ENCODE measurements at regions of chr3 and their contacts with region 1.

Region 1: DNA sequence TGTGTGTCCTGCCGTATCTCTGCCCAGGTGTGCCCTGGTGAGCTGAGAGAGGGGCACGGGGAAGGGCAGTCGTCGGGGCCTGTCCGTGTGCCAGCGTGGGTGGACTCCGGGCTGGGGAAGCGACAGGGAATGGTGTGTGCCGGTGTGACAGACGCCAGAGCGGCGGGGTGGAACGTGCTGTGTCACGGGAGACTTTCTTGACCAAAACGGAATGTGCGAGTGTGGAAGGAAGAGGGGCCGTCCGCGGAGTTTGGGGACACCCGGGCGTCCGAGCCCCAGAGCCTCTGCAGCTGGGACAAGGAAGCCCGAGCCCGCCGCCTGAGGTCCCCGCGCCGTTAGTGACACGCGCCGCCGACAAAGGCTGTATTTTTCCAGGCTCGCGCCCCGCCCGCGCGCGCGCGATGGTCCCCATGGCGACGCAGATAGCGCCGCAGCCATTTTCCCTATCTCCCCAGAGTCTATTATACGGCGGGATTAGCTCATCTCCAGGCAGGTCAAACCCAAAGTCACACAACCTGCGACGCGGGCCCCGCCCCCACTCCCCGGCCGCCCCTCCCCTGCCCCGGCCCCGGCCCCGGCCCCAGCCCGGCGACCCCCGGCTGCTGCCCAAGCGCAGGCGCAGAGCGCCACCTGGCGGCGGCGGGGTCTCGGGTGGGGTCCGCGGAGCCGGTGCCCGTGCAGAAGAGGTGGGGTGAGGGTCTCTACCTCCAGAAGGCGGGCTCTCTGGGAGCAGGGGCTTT is 4.6 kb upstream of the GATA2 start:
- DNase-seq: peak in 1 of 2 experiments; percentile 97
- H3K4me3 ChIP-seq: peak overlapping the region; percentile 34 to 59 (median 46)
- H3K27ac ChIP-seq: no peak overlapping the region
- H3K4me1 ChIP-seq: peaks cover 0 to 33% (median 18%) of the 10 kb centered on the region in 4 experiments; a peak in 6 of 7 replicates
- H3K27me3 ChIP-seq: peaks cover 50 to 66% (median 65%) of the 10 kb centered on the region in 4 experiments
- CTCF ChIP-seq: peak in 2 of 3 experiments; percentile 63 to 85; a peak in 3 of 4 replicates
- EP300 ChIP-seq: no peak
- POLR2A ChIP-seq: no peak
- RAD21 ChIP-seq: peak; percentile 74 to 86

Region 2: GRCh38 chr3:128456776-128457715 is 40.5 kb before region 1 on chr3:
- CTCF ChIA-PET with region 1: interaction called, 17 read pairs
- POLR2A ChIA-PET with region 1: no interaction called
- DNase-seq: no peak
- H3K4me3 ChIP-seq: no peak overlapping the region
- H3K27ac ChIP-seq: no peak overlapping the region
- H3K4me1 ChIP-seq: peaks cover 0 to 5% (median 0%) of the 10 kb centered on the region in 4 experiments; a peak in 1 of 7 replicates
- H3K27me3 ChIP-seq: peaks cover 0 to 6% (median 0%) of the 10 kb centered on the region in 4 experiments; a peak in 4 of 7 replicates
- CTCF ChIP-seq: no peak
- EP300 ChIP-seq: no peak
- POLR2A ChIP-seq: no peak
- RAD21 ChIP-seq: no peak

Region 3: GRCh38 chr3:128464188-128464587 is 33.4 kb before region 1 on chr3:
- CTCF ChIA-PET with region 1: interaction called, 17 read pairs
- POLR2A ChIA-PET with region 1: no interaction called
- DNase-seq: no peak
- H3K4me3 ChIP-seq: no peak overlapping the region
- H3K27ac ChIP-seq: no peak overlapping the region
- H3K4me1 ChIP-seq: peaks cover 0 to 2% (median 0%) of the 10 kb centered on the region in 4 experiments; a peak in 2 of 7 replicates
- H3K27me3 ChIP-seq: peaks cover 0 to 13% (median 11%) of the 10 kb centered on the region in 4 experiments; a peak in 3 of 7 replicates
- CTCF ChIP-seq: peak in 2 of 3 experiments; percentile 29 to 35; a peak in 1 of 4 replicates
- EP300 ChIP-seq: no peak
- POLR2A ChIP-seq: no peak
- RAD21 ChIP-seq: peak; percentile 21 to 45; a peak in 2 of 4 replicates

Region 4: DNA sequence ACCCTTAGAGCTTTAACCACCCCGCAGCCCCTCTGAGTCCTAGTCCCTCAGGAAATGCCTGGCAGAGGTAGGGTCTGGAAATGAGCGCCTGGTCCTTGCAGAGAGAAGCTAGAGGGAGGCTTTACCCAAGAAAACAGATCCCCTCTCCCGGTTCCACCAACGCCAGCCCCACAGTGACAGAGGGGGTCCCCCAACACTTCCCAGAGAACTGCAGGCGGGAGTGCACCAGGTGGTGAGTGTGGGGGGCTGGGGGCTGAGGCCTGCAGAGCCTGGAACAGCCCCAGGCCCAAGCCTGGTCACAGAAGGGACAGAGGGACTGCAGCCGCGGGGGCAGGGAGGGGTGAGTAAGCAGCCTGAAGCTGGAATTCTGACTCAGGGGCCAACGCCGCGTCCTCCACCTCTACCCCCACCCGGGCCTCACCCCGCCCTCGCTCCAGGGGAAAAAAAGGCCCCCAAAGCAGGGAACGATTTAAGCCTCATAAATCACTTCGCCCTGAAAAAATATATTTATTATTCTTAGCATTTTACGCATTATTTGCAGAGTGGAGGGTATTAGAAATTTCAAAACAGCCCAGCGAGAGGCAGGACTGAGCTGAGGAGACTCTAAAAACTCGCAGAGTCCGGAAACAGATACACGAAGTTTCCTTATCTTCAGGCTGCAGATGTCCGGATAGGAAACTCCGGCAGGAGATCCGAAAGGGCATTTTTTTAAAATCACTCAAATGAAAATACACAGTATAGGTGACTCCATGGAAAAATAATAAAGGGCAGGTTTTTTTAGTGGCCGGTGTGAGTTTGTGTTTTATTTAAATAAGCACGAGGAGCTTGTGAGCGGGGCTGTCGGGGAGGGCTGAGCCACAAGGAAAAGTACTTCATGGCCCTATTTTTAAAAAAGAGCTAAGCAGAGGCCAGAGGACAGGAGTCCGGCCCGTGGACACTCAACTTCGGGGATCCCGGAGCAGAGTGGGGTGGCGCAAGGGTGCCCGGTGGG is 14.6 kb before region 1 on chr3:
- CTCF ChIA-PET with region 1: interaction called, 18 read pairs
- POLR2A ChIA-PET with region 1: interaction called, 12 read pairs
- DNase-seq: no peak
- H3K4me3 ChIP-seq: peak overlapping the region in 3 of 4 experiments; percentile 27 to 48 (median 40); a peak in 5 of 8 replicates
- H3K27ac ChIP-seq: no peak overlapping the region
- H3K4me1 ChIP-seq: peaks cover 8 to 66% (median 50%) of the 10 kb centered on the region in 4 experiments
- H3K27me3 ChIP-seq: peaks cover 85 to 100% (median 98%) of the 10 kb centered on the region in 4 experiments
- CTCF ChIP-seq: no peak
- EP300 ChIP-seq: no peak
- POLR2A ChIP-seq: no peak
- RAD21 ChIP-seq: no peak

Measured in H1 (cell line).